Caco-2 (cell line): ENCODE measurements at regions of chr12 and their contacts with region 1.

Region 1: GRCh38 chr12:38711055-38711454 is 194.3 kb downstream of the CPNE8 start:
- DNase-seq: peak in 1 of 2 experiments; percentile 70
- H3K4me3 ChIP-seq: no peak overlapping the region
- H3K4me3 Mint-ChIP-seq: no peak overlapping the region
- H3K27ac Mint-ChIP-seq: peak overlapping the region; percentile 92
- H3K4me1 ChIP-seq: peaks cover 6% of the 10 kb centered on the region; the same call in 1 of the 2 replicates
- H3K4me1 Mint-ChIP-seq: peaks cover 13% of the 10 kb centered on the region
- H3K27me3 ChIP-seq: no peaks in the 10 kb centered on the region
- H3K27me3 Mint-ChIP-seq: no peaks in the 10 kb centered on the region
- CTCF ChIP-seq: no peak

Region 2: DNA sequence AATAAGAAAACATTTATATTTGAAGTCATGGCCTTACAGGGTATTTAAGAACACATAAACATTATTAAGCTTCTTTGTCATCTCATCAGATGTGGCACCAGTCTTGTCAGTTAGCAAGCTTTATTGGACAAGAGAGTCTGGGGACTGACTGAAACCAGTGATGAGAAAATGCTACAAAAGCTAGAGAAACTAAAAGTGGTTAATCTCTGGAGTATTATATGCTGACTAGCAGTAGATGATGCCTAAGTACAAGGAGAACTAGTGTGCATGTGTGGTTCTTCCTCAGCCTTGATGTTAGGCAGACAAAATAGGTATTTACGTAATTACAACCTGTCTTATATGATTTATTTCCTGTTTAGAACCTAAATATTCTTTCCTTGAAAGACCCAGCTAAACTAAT is 17.8 kb after region 1 on chr12:
- CTCF ChIA-PET with region 1: no interaction called
- POLR2A ChIA-PET with region 1: no interaction called
- intact Hi-C with region 1: no loop called
- DNase-seq: no peak
- H3K4me3 ChIP-seq: no peak overlapping the region
- H3K4me3 Mint-ChIP-seq: no peak overlapping the region
- H3K27ac Mint-ChIP-seq: no peak overlapping the region
- H3K4me1 ChIP-seq: no peaks in the 10 kb centered on the region
- H3K4me1 Mint-ChIP-seq: no peaks in the 10 kb centered on the region
- H3K27me3 ChIP-seq: no peaks in the 10 kb centered on the region
- H3K27me3 Mint-ChIP-seq: no peaks in the 10 kb centered on the region
- CTCF ChIP-seq: no peak

Region 3: GRCh38 chr12:38892090-38892786 is 181.2 kb after region 1 on chr12:
- CTCF ChIA-PET with region 1: no interaction called
- POLR2A ChIA-PET with region 1: no interaction called
- intact Hi-C with region 1: loop called (anchors 1 kb)
- DNase-seq: peak; percentile 89 to 94
- H3K4me3 ChIP-seq: no peak overlapping the region
- H3K4me3 Mint-ChIP-seq: peak overlapping the region; percentile 74
- H3K27ac Mint-ChIP-seq: peak overlapping the region; percentile 97
- H3K4me1 ChIP-seq: peaks cover 40% of the 10 kb centered on the region
- H3K4me1 Mint-ChIP-seq: peaks cover 41% of the 10 kb centered on the region
- H3K27me3 ChIP-seq: no peaks in the 10 kb centered on the region
- H3K27me3 Mint-ChIP-seq: no peaks in the 10 kb centered on the region
- CTCF ChIP-seq: no peak